Caco-2 (cell line): ENCODE measurements at regions of chr3 and their contacts with region 1.

Region 1: DNA sequence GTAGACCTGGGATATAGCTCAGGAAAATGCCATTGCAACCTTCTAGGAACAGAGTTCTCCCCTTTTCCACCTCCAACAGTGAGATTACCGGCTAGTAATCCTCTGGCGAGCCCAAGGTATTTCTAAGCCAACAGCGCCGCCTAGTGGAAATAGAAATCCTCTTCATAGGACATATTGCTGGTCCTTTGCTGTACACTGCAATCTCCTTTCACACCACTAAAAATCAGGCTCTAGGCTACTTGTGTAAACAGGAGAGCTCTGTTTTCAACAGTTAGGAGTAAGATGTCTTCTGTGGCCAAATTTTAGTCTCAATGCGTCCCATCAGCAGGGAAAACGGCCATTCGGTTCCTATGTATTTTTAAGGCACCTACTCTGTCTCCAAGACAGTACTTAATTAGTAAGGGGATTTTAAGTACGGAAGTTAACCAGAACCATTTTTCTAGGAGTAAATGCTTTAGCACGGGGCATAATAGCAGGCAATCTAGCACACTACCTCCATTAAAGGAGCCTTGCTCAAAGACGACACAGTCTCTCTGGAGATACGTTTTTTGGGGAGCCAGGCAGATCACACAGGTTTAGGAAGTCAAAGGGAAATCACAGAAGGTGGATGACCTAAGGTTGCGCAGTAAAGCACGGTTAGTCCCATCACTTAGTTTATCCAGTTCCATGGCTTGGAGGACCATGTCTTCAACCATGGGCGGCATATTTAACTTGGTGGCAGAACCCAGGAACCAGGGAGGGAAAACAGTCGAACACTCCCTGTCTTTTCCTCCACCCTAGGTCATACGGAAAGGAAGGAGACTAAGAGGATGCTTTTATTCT is 43.8 kb downstream of the NCEH1 start:
- DNase-seq: peak; percentile 82 to 84
- H3K4me3 ChIP-seq: no peak overlapping the region
- H3K4me3 Mint-ChIP-seq: no peak overlapping the region
- H3K27ac Mint-ChIP-seq: no peak overlapping the region
- H3K4me1 ChIP-seq: no peaks in the 10 kb centered on the region
- H3K4me1 Mint-ChIP-seq: peaks cover 5% of the 10 kb centered on the region
- H3K27me3 ChIP-seq: no peaks in the 10 kb centered on the region
- H3K27me3 Mint-ChIP-seq: no peaks in the 10 kb centered on the region
- CTCF ChIP-seq: peak; percentile 80 to 84

Region 2: DNA sequence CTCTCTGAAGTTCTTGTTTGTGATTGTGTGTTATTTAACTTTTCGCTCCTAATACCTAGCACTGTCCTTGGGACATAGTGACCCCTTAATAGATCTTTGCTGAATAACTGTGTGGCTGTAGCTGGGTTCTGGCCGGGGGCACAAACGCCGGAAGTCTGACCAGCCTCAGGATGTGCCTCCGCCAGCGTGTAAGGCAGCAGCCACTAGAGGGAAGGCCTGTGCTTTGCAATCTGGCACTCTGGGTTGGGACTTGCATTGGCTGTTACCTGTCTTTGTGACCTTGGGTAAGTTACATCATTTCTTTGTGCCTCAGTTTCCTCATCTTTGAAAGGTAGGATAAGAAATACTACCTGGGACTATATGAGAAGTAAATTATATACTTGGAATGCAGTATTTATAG is 377.5 kb before region 1 on chr3:
- CTCF ChIA-PET with region 1: no interaction called
- POLR2A ChIA-PET with region 1: no interaction called
- intact Hi-C with region 1: no loop called
- DNase-seq: peak in 1 of 2 experiments; percentile 23
- H3K4me3 ChIP-seq: no peak overlapping the region
- H3K4me3 Mint-ChIP-seq: no peak overlapping the region
- H3K27ac Mint-ChIP-seq: no peak overlapping the region
- H3K4me1 ChIP-seq: no peaks in the 10 kb centered on the region
- H3K4me1 Mint-ChIP-seq: peaks cover 7% of the 10 kb centered on the region
- H3K27me3 ChIP-seq: no peaks in the 10 kb centered on the region
- H3K27me3 Mint-ChIP-seq: no peaks in the 10 kb centered on the region
- CTCF ChIP-seq: peak in 1 of 2 experiments; percentile 48

Region 3: GRCh38 chr3:172332256-172333041 is 334.6 kb before region 1 on chr3:
- CTCF ChIA-PET with region 1: interaction called, 5 read pairs
- POLR2A ChIA-PET with region 1: no interaction called
- intact Hi-C with region 1: loop called (anchors 1 kb)
- DNase-seq: peak; percentile 53 to 68
- H3K4me3 ChIP-seq: no peak overlapping the region
- H3K4me3 Mint-ChIP-seq: no peak overlapping the region
- H3K27ac Mint-ChIP-seq: no peak overlapping the region
- H3K4me1 ChIP-seq: no peaks in the 10 kb centered on the region
- H3K4me1 Mint-ChIP-seq: no peaks in the 10 kb centered on the region
- H3K27me3 ChIP-seq: no peaks in the 10 kb centered on the region
- H3K27me3 Mint-ChIP-seq: no peaks in the 10 kb centered on the region
- CTCF ChIP-seq: peak; percentile 82 to 88

Region 4: DNA sequence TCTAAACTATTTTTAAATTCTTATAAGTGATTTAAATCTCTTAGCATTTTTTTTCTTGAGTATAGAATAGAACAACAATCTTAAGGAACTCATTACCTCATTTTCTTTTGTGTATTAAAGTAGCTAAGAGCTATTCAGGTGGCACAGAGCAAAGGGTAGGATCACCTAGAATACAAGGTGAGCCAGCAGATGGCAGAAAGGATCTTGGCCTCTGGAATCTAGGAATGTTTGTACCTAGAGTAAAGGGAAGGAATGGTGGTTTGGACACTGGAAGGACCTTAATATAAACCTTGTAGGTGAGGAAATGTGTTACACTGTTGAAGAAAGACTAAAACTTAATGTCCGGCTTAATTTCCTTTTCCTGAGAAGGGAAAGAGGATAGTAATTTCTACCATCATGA is 307.9 kb before region 1 on chr3:
- CTCF ChIA-PET with region 1: no interaction called
- POLR2A ChIA-PET with region 1: no interaction called
- intact Hi-C with region 1: loop called (anchors 5 kb)
- DNase-seq: no peak
- H3K4me3 ChIP-seq: no peak overlapping the region
- H3K4me3 Mint-ChIP-seq: no peak overlapping the region
- H3K27ac Mint-ChIP-seq: no peak overlapping the region
- H3K4me1 ChIP-seq: no peaks in the 10 kb centered on the region
- H3K4me1 Mint-ChIP-seq: no peaks in the 10 kb centered on the region
- H3K27me3 ChIP-seq: no peaks in the 10 kb centered on the region
- H3K27me3 Mint-ChIP-seq: no peaks in the 10 kb centered on the region
- CTCF ChIP-seq: peak in 1 of 2 experiments; percentile 3

Region 5: DNA sequence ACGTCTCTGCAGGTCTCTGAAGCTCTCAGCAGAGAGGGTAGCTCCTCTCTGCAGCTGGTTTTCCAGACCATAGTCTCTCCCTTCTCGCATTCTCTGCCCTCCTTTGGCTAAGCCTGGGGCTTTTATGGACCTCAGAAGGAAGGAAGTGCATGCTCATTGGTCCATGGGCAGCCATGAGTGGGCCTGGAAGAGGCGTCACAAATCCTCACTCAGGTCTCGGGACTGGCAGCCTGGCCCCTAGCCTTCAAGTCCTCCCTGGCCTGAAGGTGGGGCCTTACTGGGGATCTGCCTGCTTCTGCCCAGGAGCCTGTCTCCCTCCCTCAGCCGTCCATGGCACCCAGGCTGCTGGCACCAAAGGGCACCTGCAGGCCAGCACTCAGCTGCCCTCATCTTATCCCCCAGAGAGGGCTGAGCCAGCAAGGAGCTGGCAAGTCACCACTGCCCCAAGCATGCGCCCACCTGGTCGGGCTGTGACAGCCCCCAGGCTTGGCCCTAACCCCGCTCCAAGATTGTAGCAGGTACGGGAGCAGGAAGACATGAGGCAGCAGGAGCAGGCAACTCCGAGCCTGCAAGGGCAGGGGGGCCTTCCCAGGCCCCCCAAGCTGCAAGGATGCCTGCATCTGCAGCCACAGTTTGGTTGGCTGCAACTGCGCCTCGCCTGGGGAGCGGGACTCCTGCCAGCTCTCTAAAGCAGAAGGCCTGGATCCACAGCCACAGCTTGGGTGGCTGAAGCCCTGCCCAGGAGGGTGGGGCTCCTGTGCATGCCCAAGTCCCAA is 256.2 kb before region 1 on chr3:
- CTCF ChIA-PET with region 1: no interaction called
- POLR2A ChIA-PET with region 1: no interaction called
- intact Hi-C with region 1: loop called (anchors 5 kb)
- DNase-seq: no peak
- H3K4me3 ChIP-seq: no peak overlapping the region
- H3K4me3 Mint-ChIP-seq: no peak overlapping the region
- H3K27ac Mint-ChIP-seq: no peak overlapping the region
- H3K4me1 ChIP-seq: no peaks in the 10 kb centered on the region
- H3K4me1 Mint-ChIP-seq: no peaks in the 10 kb centered on the region
- H3K27me3 ChIP-seq: no peaks in the 10 kb centered on the region
- H3K27me3 Mint-ChIP-seq: peaks cover 5% of the 10 kb centered on the region
- CTCF ChIP-seq: no peak

Region 6: GRCh38 chr3:172595641-172596393 is 71.3 kb before region 1 on chr3:
- CTCF ChIA-PET with region 1: interaction called, 7 read pairs
- POLR2A ChIA-PET with region 1: no interaction called
- intact Hi-C with region 1: loop called (anchors 1 kb)
- DNase-seq: peak in 1 of 2 experiments; percentile 15
- H3K4me3 ChIP-seq: no peak overlapping the region
- H3K4me3 Mint-ChIP-seq: no peak overlapping the region
- H3K27ac Mint-ChIP-seq: no peak overlapping the region
- H3K4me1 ChIP-seq: peaks cover 19% of the 10 kb centered on the region
- H3K4me1 Mint-ChIP-seq: peaks cover 25% of the 10 kb centered on the region
- H3K27me3 ChIP-seq: no peaks in the 10 kb centered on the region
- H3K27me3 Mint-ChIP-seq: no peaks in the 10 kb centered on the region
- CTCF ChIP-seq: peak; percentile 46 to 76

Region 7: DNA sequence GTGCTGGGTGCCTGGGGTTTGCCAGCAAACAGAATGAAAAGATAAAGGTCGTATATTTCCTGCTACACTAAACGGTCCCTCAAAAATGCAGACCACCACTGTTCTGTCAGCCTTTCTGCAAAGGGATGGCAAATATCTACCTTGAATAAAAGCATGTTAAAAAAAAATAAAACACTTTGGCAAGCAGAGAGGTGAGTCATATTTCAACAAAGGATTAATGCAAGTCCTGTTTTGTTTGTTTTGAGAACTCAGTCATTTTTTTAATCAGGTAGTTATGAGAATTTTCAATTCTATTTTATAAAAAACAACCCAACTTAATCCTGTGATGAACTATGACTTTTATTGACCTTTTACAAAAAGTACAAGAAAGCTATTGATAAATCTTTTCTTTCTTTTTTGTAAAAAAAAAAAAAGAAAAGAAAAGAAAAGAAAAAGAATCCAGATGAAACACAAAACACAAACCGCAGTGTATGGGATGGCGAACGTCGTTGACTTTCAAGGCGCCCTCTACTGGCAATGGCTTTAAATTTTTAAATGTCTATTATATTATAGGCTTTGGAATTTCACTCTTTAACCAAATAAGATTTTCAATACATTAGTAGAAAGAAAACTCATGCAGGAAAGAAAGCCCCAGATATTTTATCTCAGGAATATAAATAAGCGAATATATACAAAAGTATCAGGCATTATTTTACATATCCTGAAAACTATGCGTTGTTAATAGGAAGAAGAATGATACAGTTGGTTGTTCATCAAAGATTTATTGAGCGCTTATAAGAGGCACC is 44.0 kb before region 1 on chr3:
- CTCF ChIA-PET with region 1: interaction called, 5 read pairs
- POLR2A ChIA-PET with region 1: no interaction called
- intact Hi-C with region 1: loop called (anchors 2 kb)
- DNase-seq: peak in 1 of 2 experiments; percentile 37
- H3K4me3 ChIP-seq: no peak overlapping the region
- H3K4me3 Mint-ChIP-seq: no peak overlapping the region
- H3K27ac Mint-ChIP-seq: no peak overlapping the region
- H3K4me1 ChIP-seq: no peaks in the 10 kb centered on the region
- H3K4me1 Mint-ChIP-seq: no peaks in the 10 kb centered on the region
- H3K27me3 ChIP-seq: no peaks in the 10 kb centered on the region
- H3K27me3 Mint-ChIP-seq: no peaks in the 10 kb centered on the region
- CTCF ChIP-seq: peak; percentile 52 to 54

Region 8: GRCh38 chr3:172766241-172766640 is 99.2 kb after region 1 on chr3:
- CTCF ChIA-PET with region 1: no interaction called
- POLR2A ChIA-PET with region 1: no interaction called
- intact Hi-C with region 1: no loop called
- DNase-seq: no peak
- H3K4me3 ChIP-seq: no peak overlapping the region
- H3K4me3 Mint-ChIP-seq: no peak overlapping the region
- H3K27ac Mint-ChIP-seq: no peak overlapping the region
- H3K4me1 ChIP-seq: no peaks in the 10 kb centered on the region
- H3K4me1 Mint-ChIP-seq: no peaks in the 10 kb centered on the region
- H3K27me3 ChIP-seq: no peaks in the 10 kb centered on the region
- H3K27me3 Mint-ChIP-seq: no peaks in the 10 kb centered on the region
- CTCF ChIP-seq: no peak

Region 9: GRCh38 chr3:172777901-172778300 is 110.8 kb after region 1 on chr3:
- CTCF ChIA-PET with region 1: no interaction called
- POLR2A ChIA-PET with region 1: no interaction called
- intact Hi-C with region 1: no loop called
- DNase-seq: no peak
- H3K4me3 ChIP-seq: no peak overlapping the region
- H3K4me3 Mint-ChIP-seq: no peak overlapping the region
- H3K27ac Mint-ChIP-seq: no peak overlapping the region
- H3K4me1 ChIP-seq: no peaks in the 10 kb centered on the region
- H3K4me1 Mint-ChIP-seq: no peaks in the 10 kb centered on the region
- H3K27me3 ChIP-seq: no peaks in the 10 kb centered on the region
- H3K27me3 Mint-ChIP-seq: no peaks in the 10 kb centered on the region
- CTCF ChIP-seq: no peak